Left cardiac atrium (tissue), 4 donors: ENCODE measurements at regions of chr18 and their contacts with region 1.

Region 1: GRCh38 chr18:13381944-13382365 is 163.4 kb downstream of the LDLRAD4 start:
- DNase-seq: peak; percentile 78
- ATAC-seq: peak; percentile 83 to 91

Region 2: DNA sequence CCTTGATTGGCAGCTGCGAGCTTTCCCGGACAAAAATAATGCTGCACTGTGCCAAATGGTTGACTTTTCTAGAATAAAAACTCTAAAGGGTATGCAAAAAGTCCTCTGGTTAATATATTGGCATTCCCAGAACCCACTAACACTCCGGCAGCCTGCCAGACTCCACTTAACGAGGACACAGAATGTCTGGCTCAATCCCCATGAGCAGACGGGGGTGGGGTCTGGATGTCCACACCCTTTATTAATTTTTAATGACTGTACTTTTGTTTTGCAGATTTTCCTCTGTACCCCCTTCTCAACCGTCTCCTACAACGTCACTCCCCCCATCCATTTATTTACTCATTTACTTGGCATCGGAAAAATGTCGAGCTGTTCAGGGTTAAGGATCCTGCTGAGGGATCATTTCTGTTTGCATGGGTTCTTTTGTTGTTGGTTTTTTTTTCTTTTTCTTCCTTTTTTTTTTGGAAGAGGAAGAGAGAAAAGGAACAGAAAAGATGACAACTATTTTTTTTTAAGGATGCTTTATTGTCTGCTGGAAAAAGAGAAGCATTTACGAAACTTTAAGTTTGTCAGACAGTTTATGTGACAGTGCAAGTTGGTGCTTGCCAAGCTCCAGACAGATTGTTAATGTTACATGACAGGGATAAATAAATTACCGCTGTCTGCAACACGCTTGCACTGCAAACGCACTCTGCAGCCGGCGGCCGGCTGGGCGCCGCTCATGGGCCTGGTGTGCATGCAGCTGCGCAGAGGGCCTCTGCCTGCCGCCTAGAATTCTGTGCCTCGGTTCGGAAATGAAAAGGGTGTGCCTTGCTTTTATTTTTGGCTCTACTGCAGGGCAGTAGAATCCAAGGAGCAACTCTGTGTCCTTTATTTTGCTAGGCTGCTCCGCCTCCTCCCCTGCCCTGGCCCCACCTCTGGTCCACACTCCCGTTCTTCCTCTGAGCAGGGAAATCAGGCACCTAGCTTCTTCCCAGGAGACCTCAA is 159.8 kb before region 1 on chr18:
- intact Hi-C with region 1: loop called in 1 of 2 experiments (anchors 10 kb)
- DNase-seq: peak; percentile 81
- ATAC-seq: peak; percentile 39 to 60

Region 3: GRCh38 chr18:13435596-13436327 is 53.8 kb after region 1 on chr18:
- intact Hi-C with region 1: loop called in 1 of 2 experiments (anchors 10 kb)
- DNase-seq: no peak
- ATAC-seq: peak; percentile 12 to 81